AG04449 (cell line): ENCODE measurements at regions of chr12 and their contacts with region 1.

Region 1: DNA sequence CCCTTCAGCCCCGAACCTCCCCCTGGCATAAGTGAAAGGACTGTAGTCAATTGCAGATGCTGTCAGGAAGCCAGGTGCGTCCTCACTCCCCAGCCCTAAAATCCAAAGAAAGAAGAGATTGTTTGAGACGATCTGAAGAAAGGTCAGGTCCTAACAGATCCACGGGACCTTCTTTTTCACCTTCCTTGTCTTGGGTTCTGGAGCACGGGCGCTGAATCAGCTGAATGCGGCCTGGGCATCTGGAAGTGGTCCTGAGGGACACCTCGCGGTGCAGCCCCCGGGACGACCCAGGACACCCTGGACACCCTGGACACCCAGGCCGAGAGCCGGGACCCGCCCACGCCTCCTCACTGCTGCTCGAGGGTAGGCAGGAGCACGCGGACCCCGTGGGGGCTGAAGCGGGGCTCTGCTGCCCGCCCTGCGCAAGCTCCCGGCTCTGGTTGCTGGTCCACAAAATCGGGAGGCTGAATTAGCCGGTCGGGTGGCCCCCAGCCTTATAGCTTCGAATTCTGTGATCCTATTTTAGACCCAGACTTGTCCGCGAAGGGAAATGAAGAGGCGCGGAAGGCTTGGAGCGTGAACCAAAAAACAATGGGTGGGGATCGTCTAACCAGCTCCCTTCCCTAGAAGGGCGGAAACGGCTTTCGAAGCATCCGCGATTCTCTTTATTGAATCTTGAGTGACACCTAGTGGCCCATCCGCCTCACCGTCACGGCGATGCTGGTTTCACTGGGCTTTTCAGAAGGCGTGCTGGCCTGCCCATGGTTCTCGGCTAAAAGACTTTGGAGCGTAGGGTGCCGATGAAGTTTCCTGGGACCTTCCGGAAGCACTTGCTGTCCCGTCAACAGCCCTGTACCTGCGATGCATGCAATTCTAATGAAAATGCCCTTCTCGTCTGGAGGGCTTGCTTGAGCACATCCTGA is 46.4 kb upstream of the PLXNC1 start:
- DNase-seq: no peak
- H3K4me3 ChIP-seq: peak overlapping the region; percentile 68
- CTCF ChIP-seq: peak; percentile 86

Region 2: GRCh38 chr12:93419388-93420034 is 682.5 kb before region 1 on chr12:
- CTCF ChIA-PET with region 1: interaction called, 17 read pairs
- POLR2A ChIA-PET with region 1: interaction called, 3 read pairs
- DNase-seq: no peak
- H3K4me3 ChIP-seq: no peak overlapping the region
- CTCF ChIP-seq: peak; percentile 32

Region 3: DNA sequence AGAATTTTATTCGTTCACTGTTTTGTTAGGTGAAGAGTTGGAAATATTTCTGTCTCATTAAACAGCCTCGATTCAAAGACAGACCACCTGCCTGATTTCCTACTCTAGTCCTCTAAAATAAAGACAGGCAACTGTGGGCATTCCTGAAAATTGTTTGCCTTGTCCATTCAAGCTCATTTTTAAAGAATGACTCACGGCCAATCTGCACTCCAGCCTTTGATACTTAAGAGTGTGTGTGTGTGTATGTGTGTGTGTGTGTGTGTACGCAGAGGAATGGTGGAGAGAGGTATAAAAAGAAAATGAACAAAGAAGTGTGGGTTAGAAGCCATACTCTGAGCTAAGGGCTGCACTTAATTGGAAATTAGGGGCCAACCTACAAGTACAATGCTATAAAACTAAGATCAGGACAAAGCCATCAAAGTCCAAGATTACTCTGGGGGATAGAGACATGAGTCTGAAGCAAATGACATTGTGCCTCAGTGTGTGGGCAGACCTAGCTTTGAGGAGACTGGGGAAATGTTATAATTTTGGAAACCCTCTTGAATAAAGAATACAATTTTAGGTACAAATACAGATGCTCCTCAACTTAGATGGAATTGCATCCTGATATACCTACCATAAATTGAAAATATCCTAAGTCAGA is 575.1 kb before region 1 on chr12:
- CTCF ChIA-PET with region 1: interaction called, 52 read pairs
- POLR2A ChIA-PET with region 1: no interaction called
- DNase-seq: peak; percentile 82
- H3K4me3 ChIP-seq: no peak overlapping the region
- CTCF ChIP-seq: no peak

Region 4: DNA sequence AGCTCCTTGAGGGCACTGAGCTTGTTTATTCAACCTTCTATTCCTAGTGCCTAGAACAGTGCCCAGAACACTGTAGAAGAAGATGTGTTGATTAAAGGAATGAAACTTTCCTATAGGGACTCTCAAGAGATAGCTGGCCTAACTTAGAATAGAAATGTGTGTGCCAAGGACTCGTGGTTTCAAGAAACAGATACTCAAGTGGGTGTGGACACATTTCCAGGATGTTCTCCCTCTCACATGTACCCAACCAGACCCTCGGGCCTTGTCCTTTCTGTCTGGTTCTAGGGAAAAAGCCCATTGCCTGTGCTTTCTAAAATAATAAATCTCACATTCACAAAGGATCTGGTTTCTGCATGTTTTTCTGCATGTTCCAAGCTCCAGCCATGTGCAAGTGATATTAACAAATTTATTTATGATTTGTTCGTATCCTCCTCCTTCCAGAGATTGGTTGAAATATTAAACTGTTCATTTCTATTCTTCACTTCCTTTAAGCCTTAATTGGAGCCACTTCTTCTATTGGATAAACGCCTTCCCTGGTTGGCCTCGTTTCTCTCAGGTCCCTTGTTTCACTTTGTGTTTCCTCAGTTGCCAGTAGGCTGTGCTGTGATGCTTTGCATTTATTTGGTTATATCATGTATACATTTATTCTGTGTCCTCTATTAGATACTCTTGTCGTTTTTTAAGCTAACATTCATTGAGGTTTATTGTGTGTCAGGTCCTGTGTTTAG is 335.0 kb before region 1 on chr12:
- CTCF ChIA-PET with region 1: interaction called, 326 read pairs
- POLR2A ChIA-PET with region 1: interaction called, 21 read pairs
- DNase-seq: no peak
- H3K4me3 ChIP-seq: no peak overlapping the region
- CTCF ChIP-seq: peak; percentile 61

Region 5: DNA sequence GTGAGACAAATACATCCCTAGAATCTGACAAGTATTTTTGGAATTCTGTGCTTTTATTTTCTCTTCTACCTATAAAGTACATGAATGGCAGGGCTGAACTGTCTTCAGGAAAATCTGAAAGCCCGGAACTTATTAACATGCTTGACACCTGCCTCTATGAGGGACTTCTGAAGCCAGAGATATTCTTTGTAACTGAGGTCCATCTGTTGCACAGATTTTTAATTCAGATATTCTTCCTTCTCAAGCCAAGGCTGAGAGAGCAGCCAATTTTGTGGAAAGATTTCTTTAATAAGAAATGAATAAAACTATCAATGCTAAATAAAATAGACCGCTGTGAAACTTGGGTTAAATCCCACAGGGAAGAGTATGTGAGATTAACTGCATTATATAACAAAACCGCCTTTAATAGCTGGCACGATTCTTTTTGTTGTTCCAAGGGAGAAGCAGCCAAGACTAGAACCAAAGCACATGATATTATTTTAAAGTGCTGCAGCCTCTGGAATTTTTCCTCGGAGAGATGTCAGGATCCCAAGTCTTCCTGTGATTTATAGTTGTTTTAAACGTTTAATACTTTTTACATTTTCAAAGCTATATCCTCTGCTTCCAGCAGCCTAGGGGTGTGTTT is 276.0 kb before region 1 on chr12:
- CTCF ChIA-PET with region 1: interaction called, 21 read pairs
- POLR2A ChIA-PET with region 1: no interaction called
- DNase-seq: peak; percentile 31
- H3K4me3 ChIP-seq: no peak overlapping the region
- CTCF ChIP-seq: no peak

Region 6: DNA sequence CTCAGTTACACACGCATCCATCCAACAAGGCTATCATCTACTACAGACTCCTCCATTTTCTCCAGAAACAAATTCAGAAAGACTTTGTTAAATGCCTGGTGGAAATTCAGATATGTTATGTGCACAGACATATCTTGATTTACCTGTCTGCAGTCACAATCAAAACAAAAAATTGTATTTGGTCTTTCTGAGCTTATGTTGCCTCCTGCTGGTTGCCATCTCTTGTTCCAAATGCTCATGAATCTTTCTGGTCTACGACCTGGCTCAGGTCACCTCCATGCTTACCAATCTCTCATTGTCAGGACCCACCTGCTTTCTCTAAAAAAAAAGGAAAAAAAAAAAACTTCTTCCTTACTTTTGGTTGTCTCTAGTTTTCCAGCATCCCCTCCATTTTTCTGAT is 122.8 kb before region 1 on chr12:
- CTCF ChIA-PET with region 1: interaction called, 16 read pairs
- POLR2A ChIA-PET with region 1: no interaction called
- DNase-seq: no peak
- H3K4me3 ChIP-seq: no peak overlapping the region
- CTCF ChIP-seq: no peak